H1 (cell line): ENCODE measurements at regions of chr3 and their contacts with region 1.

Region 1: DNA sequence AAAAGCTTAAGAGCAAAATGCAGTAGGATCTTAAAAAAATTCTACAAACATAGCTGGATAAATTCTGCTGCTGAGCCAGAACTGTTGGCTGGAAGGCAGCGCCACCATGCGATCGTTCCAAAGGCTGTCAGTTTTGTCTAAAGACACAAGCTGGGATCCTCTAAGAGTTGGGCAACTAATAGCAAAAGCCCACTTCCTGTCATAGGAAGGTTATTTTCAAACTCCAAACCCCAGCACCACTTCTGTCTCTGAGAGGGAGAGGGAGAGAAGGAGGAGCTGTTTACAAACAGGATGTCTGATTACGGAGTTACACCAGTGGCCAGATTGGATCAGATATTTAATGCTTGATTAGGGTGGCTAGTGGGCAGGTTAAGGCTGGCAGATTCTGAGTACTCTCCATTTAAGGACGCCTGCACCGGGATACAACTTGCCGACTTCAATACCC is 44.0 kb downstream of the EIF4E3 start:
- DNase-seq: peak in 1 of 2 experiments; percentile 72
- H3K4me3 ChIP-seq: no peak overlapping the region
- H3K27ac ChIP-seq: no peak overlapping the region
- H3K4me1 ChIP-seq: peaks cover 0 to 14% (median 5%) of the 10 kb centered on the region in 4 experiments; a peak in 5 of 7 replicates
- H3K27me3 ChIP-seq: peaks cover 0 to 1% (median 0%) of the 10 kb centered on the region in 4 experiments; a peak in 1 of 7 replicates
- CTCF ChIP-seq: peak; percentile 74 to 87 (median 75)
- EP300 ChIP-seq: no peak
- POLR2A ChIP-seq: no peak
- RAD21 ChIP-seq: peak; percentile 87 to 96

Region 2: DNA sequence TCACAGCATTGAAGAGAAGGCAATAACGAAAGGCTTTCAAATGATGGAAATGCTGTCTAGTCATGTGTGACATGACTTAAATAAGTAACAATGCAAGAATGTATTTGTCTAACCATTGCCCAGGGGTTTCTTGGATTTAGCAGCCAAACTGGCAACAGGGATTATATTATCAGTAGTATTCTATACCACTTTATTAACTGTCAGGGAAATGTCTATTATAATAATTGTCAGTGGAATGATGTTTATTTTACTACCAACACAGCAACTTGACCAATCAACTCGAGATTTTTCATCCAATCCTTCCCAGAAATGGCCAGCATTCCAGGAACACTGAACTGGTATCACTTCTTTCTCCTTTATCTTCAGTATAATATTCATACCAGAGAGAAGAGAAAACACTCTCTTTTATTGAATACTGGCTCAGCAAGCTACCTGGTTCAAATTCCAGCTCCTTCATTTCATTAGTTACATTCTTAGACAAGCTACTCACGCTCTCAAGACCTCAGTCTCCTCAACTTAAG is 163.9 kb before region 1 on chr3:
- CTCF ChIA-PET with region 1: no interaction called
- POLR2A ChIA-PET with region 1: no interaction called
- DNase-seq: no peak
- H3K4me3 ChIP-seq: no peak overlapping the region
- H3K27ac ChIP-seq: no peak overlapping the region
- H3K4me1 ChIP-seq: peaks cover 0 to 8% (median 3%) of the 10 kb centered on the region in 4 experiments; a peak in 5 of 7 replicates
- H3K27me3 ChIP-seq: no peaks in the 10 kb centered on the region
- CTCF ChIP-seq: no peak
- EP300 ChIP-seq: no peak
- POLR2A ChIP-seq: no peak
- RAD21 ChIP-seq: no peak

Region 3: DNA sequence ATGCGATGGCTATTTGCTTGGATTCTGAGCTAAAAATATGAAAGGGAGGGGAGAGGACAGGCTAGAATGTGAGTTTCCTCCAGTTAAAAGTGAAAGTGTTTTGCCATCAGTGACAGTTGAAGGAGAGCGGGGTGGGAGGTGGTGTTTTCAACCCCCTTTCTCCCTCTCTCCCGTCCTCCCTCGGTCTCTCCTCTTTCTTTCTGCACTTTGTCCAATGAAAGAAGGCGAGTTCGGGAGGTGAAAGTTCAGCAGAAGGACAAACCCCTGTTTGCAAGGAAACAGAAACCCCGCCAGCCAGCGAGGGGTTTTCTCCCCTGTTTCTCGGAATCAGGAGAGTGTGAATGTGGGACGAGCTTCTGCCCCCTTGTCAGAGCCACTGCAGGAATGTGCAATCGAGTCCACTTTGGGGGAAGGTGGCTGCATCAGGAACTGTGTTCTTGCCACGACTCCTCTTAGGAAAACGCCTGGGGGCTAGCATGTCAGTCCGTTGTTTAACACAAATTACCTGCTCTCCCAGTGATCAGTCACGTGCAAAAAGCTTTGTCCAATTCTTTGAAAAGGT is 96.7 kb before region 1 on chr3:
- CTCF ChIA-PET with region 1: interaction called, 10 read pairs
- POLR2A ChIA-PET with region 1: interaction called, 4 read pairs
- DNase-seq: peak in 1 of 2 experiments; percentile 62
- H3K4me3 ChIP-seq: peak overlapping the region; percentile 50 to 87 (median 74)
- H3K27ac ChIP-seq: peak overlapping the region; percentile 47
- H3K4me1 ChIP-seq: peaks cover 0 to 4% (median 2%) of the 10 kb centered on the region in 4 experiments; a peak in 4 of 7 replicates
- H3K27me3 ChIP-seq: peaks cover 0 to 19% (median 10%) of the 10 kb centered on the region in 4 experiments; a peak in 5 of 7 replicates
- CTCF ChIP-seq: no peak
- EP300 ChIP-seq: no peak
- POLR2A ChIP-seq: peak; percentile 41; a peak in 1 of 3 replicates
- RAD21 ChIP-seq: no peak

Region 4: GRCh38 chr3:71657831-71658530 is 23.3 kb before region 1 on chr3:
- CTCF ChIA-PET with region 1: interaction called, 16 read pairs
- POLR2A ChIA-PET with region 1: no interaction called
- DNase-seq: no peak
- H3K4me3 ChIP-seq: no peak overlapping the region
- H3K27ac ChIP-seq: no peak overlapping the region
- H3K4me1 ChIP-seq: peaks cover 0 to 17% (median 9%) of the 10 kb centered on the region in 4 experiments; a peak in 5 of 7 replicates
- H3K27me3 ChIP-seq: no peaks in the 10 kb centered on the region
- CTCF ChIP-seq: no peak
- EP300 ChIP-seq: no peak
- POLR2A ChIP-seq: no peak
- RAD21 ChIP-seq: no peak

Region 5: GRCh38 chr3:71776538-71776937 is 95.3 kb after region 1 on chr3:
- CTCF ChIA-PET with region 1: no interaction called
- POLR2A ChIA-PET with region 1: no interaction called
- DNase-seq: no peak
- H3K4me3 ChIP-seq: no peak overlapping the region
- H3K27ac ChIP-seq: no peak overlapping the region
- H3K4me1 ChIP-seq: peaks cover 4 to 16% (median 12%) of the 10 kb centered on the region in 4 experiments
- H3K27me3 ChIP-seq: no peaks in the 10 kb centered on the region
- CTCF ChIP-seq: no peak
- EP300 ChIP-seq: no peak
- POLR2A ChIP-seq: no peak
- RAD21 ChIP-seq: no peak